ENCODE measurements at regions of chr4 and their contacts with region 1.

Region 1: DNA sequence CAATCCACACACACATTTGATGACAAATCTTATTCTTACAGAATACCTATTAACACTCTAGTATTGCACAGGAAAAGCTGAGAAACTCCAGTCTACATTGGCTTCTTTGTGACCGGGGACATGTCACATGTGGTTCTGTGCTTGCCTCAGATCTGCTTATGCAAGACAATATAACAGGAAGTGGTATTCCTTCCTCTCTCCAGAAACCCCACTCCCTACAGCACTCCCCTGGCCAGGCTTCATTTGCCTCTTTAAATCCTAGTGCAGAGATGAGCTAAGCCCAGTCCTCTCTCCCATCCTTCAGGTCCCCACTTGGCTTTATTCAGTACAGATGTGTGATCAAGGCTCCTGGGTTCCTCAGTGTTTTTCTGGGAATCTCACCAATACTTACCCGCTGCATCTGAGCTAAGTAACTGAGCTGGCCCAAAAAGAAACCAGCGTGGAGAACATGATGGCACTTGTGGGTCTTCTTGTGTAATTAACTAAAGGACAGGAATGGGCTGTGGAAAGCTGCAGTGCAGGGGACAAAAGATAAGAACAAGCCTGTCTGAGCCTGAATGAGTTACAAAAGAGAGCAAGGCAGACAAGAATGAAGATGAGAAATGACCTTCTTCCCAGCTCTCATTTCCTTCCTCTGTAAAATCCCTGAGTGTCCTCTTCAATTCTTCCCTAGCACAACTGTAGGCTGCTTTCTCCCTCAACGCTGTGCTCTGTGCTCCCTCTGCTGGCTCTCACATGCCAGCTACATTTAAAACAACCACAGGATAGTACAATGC is 105.6 kb downstream of the HNRNPD start:
- DNase-seq: peak in 8 of 9 experiments; percentile 15 to 71 (median 46)
- ATAC-seq: peak; percentile 94
- H3K4me3 ChIP-seq: no peak overlapping the region
- H3K4me3 Mint-ChIP-seq: no peak overlapping the region
- H3K27ac ChIP-seq: no peak overlapping the region
- H3K27ac Mint-ChIP-seq: no peak overlapping the region
- H3K4me1 ChIP-seq: peaks cover 11% of the 10 kb centered on the region
- H3K4me1 Mint-ChIP-seq: peaks cover 16% of the 10 kb centered on the region
- H3K27me3 ChIP-seq: no peaks in the 10 kb centered on the region
- H3K27me3 Mint-ChIP-seq: peaks cover 6% of the 10 kb centered on the region
- CTCF ChIP-seq: peak; percentile 79

Region 2: DNA sequence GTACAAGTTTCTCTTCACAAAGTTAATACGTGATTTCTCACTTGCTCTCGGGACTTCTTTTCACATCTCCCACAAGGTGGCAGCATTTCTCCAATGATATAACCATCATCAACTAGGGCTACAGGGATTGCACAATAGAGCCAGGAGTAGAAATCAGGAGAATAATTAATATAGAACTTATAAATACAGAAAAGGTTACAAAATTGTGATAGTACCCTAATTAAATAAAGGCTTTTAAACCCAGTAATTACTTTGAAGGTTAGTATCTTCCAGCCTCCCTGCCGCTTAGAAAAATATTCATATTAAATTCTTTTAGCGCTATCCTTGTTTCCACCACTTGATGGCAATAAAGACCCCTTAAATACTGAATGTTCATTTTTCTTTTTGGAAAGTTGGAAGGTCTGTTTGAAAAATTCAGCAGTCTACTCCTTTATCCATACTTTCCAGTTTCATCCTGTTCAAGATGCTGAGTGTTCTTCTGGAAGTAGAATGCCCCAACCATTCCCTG is 862.3 kb before region 1 on chr4:
- CTCF ChIA-PET with region 1: interaction called, 12 read pairs
- POLR2A ChIA-PET with region 1: no interaction called
- intact Hi-C with region 1: loop called (anchors 1 kb)
- DNase-seq: peak in 5 of 9 experiments; percentile 27 to 86 (median 51)
- ATAC-seq: peak; percentile 87
- H3K4me3 ChIP-seq: no peak overlapping the region
- H3K4me3 Mint-ChIP-seq: peak overlapping the region; percentile 6
- H3K27ac ChIP-seq: no peak overlapping the region
- H3K27ac Mint-ChIP-seq: no peak overlapping the region
- H3K4me1 ChIP-seq: no peaks in the 10 kb centered on the region
- H3K4me1 Mint-ChIP-seq: peaks cover 6% of the 10 kb centered on the region
- H3K27me3 ChIP-seq: peaks cover 0 to 3% of the 10 kb centered on the region in 2 experiments
- H3K27me3 Mint-ChIP-seq: peaks cover 4% of the 10 kb centered on the region
- CTCF ChIP-seq: peak; percentile 98

Region 3: GRCh38 chr4:81913427-81913879 is 354.8 kb before region 1 on chr4:
- CTCF ChIA-PET with region 1: interaction called, 15 read pairs
- POLR2A ChIA-PET with region 1: no interaction called
- intact Hi-C with region 1: loop called (anchors 1 to 5 kb)
- DNase-seq: peak; percentile 6 to 68 (median 53)
- ATAC-seq: peak; percentile 65
- H3K4me3 ChIP-seq: no peak overlapping the region
- H3K4me3 Mint-ChIP-seq: no peak overlapping the region
- H3K27ac ChIP-seq: no peak overlapping the region
- H3K27ac Mint-ChIP-seq: no peak overlapping the region
- H3K4me1 ChIP-seq: no peaks in the 10 kb centered on the region
- H3K4me1 Mint-ChIP-seq: peaks cover 2% of the 10 kb centered on the region
- H3K27me3 ChIP-seq: peaks cover 0 to 2% of the 10 kb centered on the region in 2 experiments
- H3K27me3 Mint-ChIP-seq: peaks cover 8% of the 10 kb centered on the region
- CTCF ChIP-seq: peak; percentile 71

Region 4: GRCh38 chr4:82201805-82202641 is 66.2 kb before region 1 on chr4:
- CTCF ChIA-PET with region 1: interaction called, 10 read pairs
- POLR2A ChIA-PET with region 1: no interaction called
- intact Hi-C with region 1: no loop called
- DNase-seq: peak in 7 of 9 experiments; percentile 6 to 64 (median 37)
- ATAC-seq: peak; percentile 34
- H3K4me3 ChIP-seq: no peak overlapping the region
- H3K4me3 Mint-ChIP-seq: no peak overlapping the region
- H3K27ac ChIP-seq: no peak overlapping the region
- H3K27ac Mint-ChIP-seq: no peak overlapping the region
- H3K4me1 ChIP-seq: no peaks in the 10 kb centered on the region
- H3K4me1 Mint-ChIP-seq: peaks cover 5% of the 10 kb centered on the region
- H3K27me3 ChIP-seq: peaks cover 0 to 3% of the 10 kb centered on the region in 2 experiments
- H3K27me3 Mint-ChIP-seq: peaks cover 3% of the 10 kb centered on the region
- CTCF ChIP-seq: peak; percentile 75

Region 5: DNA sequence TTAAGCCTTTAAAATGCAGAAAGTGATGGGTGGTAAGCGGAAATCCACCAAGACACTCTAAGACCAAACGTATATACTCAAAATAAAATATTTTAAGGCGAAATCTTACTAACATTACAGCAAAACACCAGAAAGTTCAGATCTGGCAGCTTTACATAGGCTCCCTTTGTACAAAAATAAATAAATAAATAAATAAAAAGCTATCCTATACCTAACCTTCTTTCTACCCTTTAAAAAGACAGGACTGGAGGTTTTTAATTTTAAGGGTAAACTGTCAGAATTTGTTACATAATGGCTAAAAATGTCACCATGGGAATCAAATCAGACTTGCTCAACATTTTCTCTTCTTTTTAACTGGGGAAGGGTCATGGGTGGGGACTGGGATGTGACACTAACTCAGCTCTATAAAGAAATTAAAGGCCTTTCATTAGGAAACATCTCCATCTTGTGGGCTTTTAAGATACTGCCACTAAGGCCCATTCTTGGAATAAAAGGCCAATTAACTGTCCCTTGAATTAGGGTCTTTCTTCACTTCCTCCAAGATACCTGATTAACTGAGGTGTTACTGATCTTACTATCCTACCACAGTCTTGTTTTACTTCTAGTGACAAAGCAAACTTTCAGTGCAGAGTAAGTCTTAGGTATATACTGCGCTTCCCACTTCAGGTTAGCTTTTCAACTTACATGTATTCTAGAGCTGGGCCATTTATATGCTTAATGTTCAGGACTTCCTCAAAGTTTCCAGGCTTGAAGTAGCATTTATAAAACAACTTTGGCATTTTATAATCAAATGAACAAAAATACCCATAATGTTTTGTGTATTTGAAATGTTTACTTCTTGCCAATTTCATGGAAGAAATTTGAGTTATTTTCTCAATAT is 92.3 kb after region 1 on chr4:
- CTCF ChIA-PET with region 1: interaction called, 10 read pairs
- POLR2A ChIA-PET with region 1: no interaction called
- intact Hi-C with region 1: no loop called
- DNase-seq: peak in 2 of 9 experiments; percentile 51 to 59
- ATAC-seq: peak; percentile 75
- H3K4me3 ChIP-seq: no peak overlapping the region
- H3K4me3 Mint-ChIP-seq: peak overlapping the region; percentile 1
- H3K27ac ChIP-seq: peak overlapping the region in 1 of 2 experiments; percentile 21
- H3K27ac Mint-ChIP-seq: peak overlapping the region; percentile 15
- H3K4me1 ChIP-seq: peaks cover 92% of the 10 kb centered on the region
- H3K4me1 Mint-ChIP-seq: peaks cover 91% of the 10 kb centered on the region
- H3K27me3 ChIP-seq: no peaks in the 10 kb centered on the region
- H3K27me3 Mint-ChIP-seq: no peaks in the 10 kb centered on the region
- CTCF ChIP-seq: peak; percentile 56

Region 6: DNA sequence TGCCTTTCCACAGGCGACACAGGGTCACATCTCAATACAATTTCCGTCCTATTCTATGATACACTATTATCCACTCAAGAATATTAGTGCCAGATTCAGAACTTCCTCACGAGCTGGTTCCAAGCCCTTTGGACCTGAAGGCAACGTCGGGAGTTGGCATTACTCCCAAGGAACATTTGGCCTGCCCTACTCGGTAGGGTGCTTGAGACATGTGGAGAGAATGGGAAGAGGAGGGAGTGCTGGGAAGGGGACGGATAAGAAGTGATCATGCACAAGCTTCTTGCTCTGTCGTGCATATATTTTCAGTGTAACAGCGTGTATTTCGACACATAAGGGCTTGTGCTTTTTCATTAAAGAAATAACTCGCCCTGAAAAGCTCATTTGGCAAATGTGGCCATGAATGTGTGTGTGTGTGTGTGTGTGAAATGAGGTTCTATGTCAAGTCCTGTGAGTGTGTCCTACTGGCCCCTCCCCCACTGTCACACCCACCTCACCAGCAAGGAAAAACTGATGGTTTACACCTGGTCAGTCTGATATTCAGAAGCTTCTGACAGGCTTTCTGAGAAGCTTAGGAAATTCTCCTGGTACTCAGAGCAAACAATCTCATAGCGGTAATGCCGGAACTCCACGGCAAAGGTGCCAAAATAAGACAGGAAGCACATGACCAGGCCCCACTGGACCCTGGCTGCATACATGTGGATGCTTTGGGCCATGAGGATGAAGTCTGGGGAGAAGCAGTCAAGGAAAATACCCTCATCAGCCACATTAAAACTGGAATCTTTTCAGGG is 217.0 kb after region 1 on chr4:
- CTCF ChIA-PET with region 1: no interaction called
- POLR2A ChIA-PET with region 1: no interaction called
- intact Hi-C with region 1: no loop called
- DNase-seq: no peak
- ATAC-seq: no peak
- H3K4me3 ChIP-seq: no peak overlapping the region
- H3K4me3 Mint-ChIP-seq: no peak overlapping the region
- H3K27ac ChIP-seq: no peak overlapping the region
- H3K27ac Mint-ChIP-seq: no peak overlapping the region
- H3K4me1 ChIP-seq: no peaks in the 10 kb centered on the region
- H3K4me1 Mint-ChIP-seq: no peaks in the 10 kb centered on the region
- H3K27me3 ChIP-seq: no peaks in the 10 kb centered on the region
- H3K27me3 Mint-ChIP-seq: no peaks in the 10 kb centered on the region
- CTCF ChIP-seq: no peak

Measured in CD8-positive, alpha-beta T cell (primary cell).